Calu3 (cell line): ENCODE measurements at regions of chr5 and their contacts with region 1.

Region 1: GRCh38 chr5:154287136-154287535 is 96.6 kb downstream of the GALNT10 start:
- DNase-seq: peak; percentile 71
- H3K4me3 Mint-ChIP-seq: peak overlapping the region; percentile 55
- H3K27ac Mint-ChIP-seq: peak overlapping the region; percentile 54
- H3K4me1 Mint-ChIP-seq: peaks cover 53% of the 10 kb centered on the region
- H3K27me3 Mint-ChIP-seq: no peaks in the 10 kb centered on the region
- CTCF ChIP-seq: no peak

Region 2: DNA sequence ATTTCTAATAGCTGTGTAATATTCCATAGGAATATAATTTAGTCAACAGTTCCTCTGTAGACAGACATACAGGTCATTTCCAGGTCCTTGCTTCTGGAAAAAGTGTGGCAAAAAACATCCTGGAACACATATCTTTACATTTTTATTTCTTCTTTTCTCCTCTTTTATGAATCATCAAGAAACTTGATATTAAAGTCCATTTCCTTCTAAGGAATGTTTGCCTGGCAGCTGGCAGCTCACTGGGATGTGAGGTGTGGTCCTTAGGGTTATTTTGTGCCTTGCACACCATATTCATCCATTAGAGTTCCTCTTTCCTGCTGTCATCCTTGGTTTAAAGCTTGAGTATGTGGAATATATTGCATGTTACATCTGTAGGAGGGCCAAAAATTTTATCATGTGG is 25.4 kb after region 1 on chr5:
- CTCF ChIA-PET with region 1: no interaction called
- intact Hi-C with region 1: loop called (anchors 2 kb)
- DNase-seq: no peak
- H3K4me3 Mint-ChIP-seq: no peak overlapping the region
- H3K27ac Mint-ChIP-seq: no peak overlapping the region
- H3K4me1 Mint-ChIP-seq: peaks cover 35% of the 10 kb centered on the region
- H3K27me3 Mint-ChIP-seq: no peaks in the 10 kb centered on the region
- CTCF ChIP-seq: no peak

Region 3: GRCh38 chr5:154395407-154396258 is 108.5 kb after region 1 on chr5:
- CTCF ChIA-PET with region 1: no interaction called
- intact Hi-C with region 1: loop called (anchors 2 kb)
- DNase-seq: peak; percentile 80
- H3K4me3 Mint-ChIP-seq: no peak overlapping the region
- H3K27ac Mint-ChIP-seq: peak overlapping the region; percentile 34
- H3K4me1 Mint-ChIP-seq: peaks cover 66% of the 10 kb centered on the region
- H3K27me3 Mint-ChIP-seq: no peaks in the 10 kb centered on the region
- CTCF ChIP-seq: no peak

Region 4: GRCh38 chr5:154708846-154709245 is 421.7 kb after region 1 on chr5:
- CTCF ChIA-PET with region 1: no interaction called
- intact Hi-C with region 1: no loop called
- DNase-seq: peak; percentile 30
- H3K4me3 Mint-ChIP-seq: no peak overlapping the region
- H3K27ac Mint-ChIP-seq: no peak overlapping the region
- H3K4me1 Mint-ChIP-seq: peaks cover 35% of the 10 kb centered on the region
- H3K27me3 Mint-ChIP-seq: no peaks in the 10 kb centered on the region
- CTCF ChIP-seq: no peak